Activated B cell treated with CpG ODN at 0.5 μM for 24 hours (primary cell): ENCODE measurements at regions of chr18 and their contacts with region 1.

Region 1: GRCh38 chr18:79507076-79507545 is 111.4 kb downstream of the NFATC1 start:
- DNase-seq: peak; percentile 48
- ATAC-seq: peak; percentile 47
- H3K4me3 Mint-ChIP-seq: peak overlapping the region; percentile 70
- H3K27ac Mint-ChIP-seq: peak overlapping the region; percentile 89
- H3K4me1 Mint-ChIP-seq: peaks cover 63% of the 10 kb centered on the region
- H3K27me3 Mint-ChIP-seq: no peaks in the 10 kb centered on the region
- CTCF ChIP-seq: no peak

Region 2: DNA sequence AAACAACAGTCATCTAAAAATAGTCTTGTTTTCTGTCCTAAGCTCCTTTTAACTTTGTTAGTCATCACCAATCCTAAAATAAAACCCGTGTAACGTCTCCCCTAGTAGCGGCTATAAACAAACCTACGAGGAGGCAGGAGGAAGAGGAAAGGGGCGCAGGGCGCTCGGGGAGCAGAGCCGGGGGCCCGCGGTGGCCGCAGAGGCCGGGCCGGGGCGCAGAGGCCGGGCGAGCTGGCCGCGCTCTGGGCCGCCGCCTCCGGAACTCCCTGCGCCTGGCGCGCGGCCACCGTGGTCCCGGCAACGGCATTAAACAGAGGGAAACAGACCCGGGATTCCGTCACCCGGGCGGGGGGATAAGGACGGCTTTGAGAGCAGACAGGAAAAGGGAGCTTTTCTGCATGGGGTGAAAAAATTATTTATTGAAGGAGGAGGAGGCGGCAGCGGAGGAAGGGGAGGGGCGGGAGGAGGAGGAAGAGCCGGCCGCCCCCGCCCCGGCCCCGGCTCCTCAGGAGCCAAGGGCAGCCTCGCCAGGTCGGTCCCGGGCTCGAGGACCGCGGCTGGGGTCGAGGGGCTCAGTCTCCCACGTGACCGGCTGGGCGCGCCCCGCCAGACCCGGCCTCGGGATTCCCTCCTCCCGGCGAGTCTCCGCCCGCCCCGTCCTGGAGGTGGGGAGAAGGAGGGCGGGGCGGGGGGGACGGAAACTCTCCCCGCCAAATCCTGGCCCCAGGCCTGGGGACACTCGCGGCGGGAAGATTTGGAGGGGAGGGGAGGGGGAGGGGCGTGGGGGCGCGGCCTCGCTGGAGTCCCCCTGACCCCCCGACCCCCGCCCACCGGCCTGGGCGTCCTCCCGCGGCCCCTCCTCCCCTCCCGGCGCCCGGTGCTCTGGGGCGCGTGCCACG is 113.2 kb before region 1 on chr18:
- CTCF ChIA-PET with region 1: no interaction called
- POLR2A ChIA-PET with region 1: interaction called, 30 read pairs
- intact Hi-C with region 1: no loop called
- DNase-seq: peak; percentile 52
- ATAC-seq: peak; percentile 13
- H3K4me3 Mint-ChIP-seq: peak overlapping the region; percentile 84
- H3K27ac Mint-ChIP-seq: peak overlapping the region; percentile 71
- H3K4me1 Mint-ChIP-seq: peaks cover 35% of the 10 kb centered on the region
- H3K27me3 Mint-ChIP-seq: no peaks in the 10 kb centered on the region
- CTCF ChIP-seq: no peak

Region 3: GRCh38 chr18:79439201-79440023 is 67.7 kb before region 1 on chr18:
- CTCF ChIA-PET with region 1: no interaction called
- POLR2A ChIA-PET with region 1: interaction called, 5 read pairs
- intact Hi-C with region 1: loop called (anchors 2 kb)
- DNase-seq: no peak
- ATAC-seq: no peak
- H3K4me3 Mint-ChIP-seq: peak overlapping the region; percentile 35
- H3K27ac Mint-ChIP-seq: peak overlapping the region; percentile 53
- H3K4me1 Mint-ChIP-seq: peaks cover 82% of the 10 kb centered on the region
- H3K27me3 Mint-ChIP-seq: no peaks in the 10 kb centered on the region
- CTCF ChIP-seq: no peak

Region 4: GRCh38 chr18:79496978-79497637 is 10.0 kb before region 1 on chr18:
- CTCF ChIA-PET with region 1: interaction called, 10 read pairs
- POLR2A ChIA-PET with region 1: interaction called, 40 read pairs
- intact Hi-C with region 1: loop called (anchors 1 kb)
- DNase-seq: no peak
- ATAC-seq: peak; percentile 79
- H3K4me3 Mint-ChIP-seq: peak overlapping the region; percentile 64
- H3K27ac Mint-ChIP-seq: peak overlapping the region; percentile 80
- H3K4me1 Mint-ChIP-seq: peaks cover 33% of the 10 kb centered on the region
- H3K27me3 Mint-ChIP-seq: no peaks in the 10 kb centered on the region
- CTCF ChIP-seq: no peak

Region 5: GRCh38 chr18:79517341-79517740 is 10.2 kb after region 1 on chr18:
- CTCF ChIA-PET with region 1: no interaction called
- POLR2A ChIA-PET with region 1: interaction called, 45 read pairs
- intact Hi-C with region 1: loop called (anchors 1 kb)
- DNase-seq: peak; percentile 15
- ATAC-seq: peak; percentile 39
- H3K4me3 Mint-ChIP-seq: peak overlapping the region; percentile 52
- H3K27ac Mint-ChIP-seq: peak overlapping the region; percentile 78
- H3K4me1 Mint-ChIP-seq: peaks cover 56% of the 10 kb centered on the region
- H3K27me3 Mint-ChIP-seq: no peaks in the 10 kb centered on the region
- CTCF ChIP-seq: no peak